ENCODE measurements at regions of chr1 and their contacts with region 1.

Region 1: GRCh38 chr1:155167166-155168104 is 5.7 kb downstream of the KRTCAP2 start:
- DNase-seq: peak; percentile 90 to 93
- ATAC-seq: peak; percentile 65 to 87 (median 78)
- H3K4me3 ChIP-seq: peak overlapping the region in 6 of 10 donors; percentile 2 to 37 (median 28)
- H3K27ac ChIP-seq: peak overlapping the region; percentile 63 to 90 (median 82)
- H3K4me1 ChIP-seq: peaks cover 11 to 44% (median 34%) of the 10 kb centered on the region in 9 donors
- H3K27me3 ChIP-seq: peaks cover 0 to 15% (median 0%) of the 10 kb centered on the region in 7 donors
- CTCF ChIP-seq: peak; percentile 83 to 97 (median 89)

Region 2: DNA sequence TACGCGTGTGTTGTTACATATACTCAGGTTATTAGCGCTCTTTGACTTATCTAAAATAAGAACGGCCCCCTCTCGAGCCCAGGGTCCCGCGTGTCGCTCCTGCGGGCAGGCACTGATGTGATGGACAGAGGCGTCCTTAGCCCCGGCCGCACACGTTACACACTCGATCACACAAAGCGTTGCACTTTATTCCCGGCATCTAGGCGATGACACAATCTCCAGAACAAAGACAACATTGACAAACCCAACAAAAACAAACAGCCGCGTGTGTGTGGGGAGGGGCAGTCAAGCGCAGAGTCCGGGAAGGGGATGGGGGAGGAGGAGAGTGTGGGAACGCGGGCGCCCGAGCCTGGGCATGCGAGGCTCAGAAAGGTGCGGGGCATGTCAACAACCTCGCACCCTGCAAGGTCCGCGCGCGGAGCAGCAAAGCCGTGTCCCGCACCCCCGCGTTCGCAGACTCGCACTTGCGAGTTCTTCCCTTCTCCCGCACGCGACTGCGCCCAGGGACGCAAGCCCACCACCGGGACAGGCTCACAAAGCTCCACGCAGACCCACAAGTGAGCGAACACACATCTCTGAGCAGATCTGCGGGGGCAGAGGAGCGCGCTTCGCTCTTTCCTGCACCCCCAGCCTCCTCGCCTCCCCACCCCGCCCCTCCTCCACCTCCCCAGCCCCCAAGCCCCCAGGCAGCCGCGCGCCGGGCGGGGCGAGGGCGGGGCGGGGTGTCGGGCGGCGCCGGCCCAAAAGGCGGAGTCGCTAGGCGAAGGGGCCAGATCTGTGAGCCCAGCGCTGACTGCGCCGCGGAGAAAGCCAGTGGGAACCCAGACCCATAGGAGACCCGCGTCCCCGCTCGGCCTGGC is 40.1 kb before region 1 on chr1 and contains the start of gene EFNA1:
- intact Hi-C with region 1: loop called in 5 of 10 experiments (anchors 2 to 5 kb)
- DNase-seq: peak; percentile 75 to 81
- ATAC-seq: peak; percentile 60 to 73 (median 70)
- H3K4me3 ChIP-seq: peak within 1 kb of the TSS; percentile 47 to 93 (median 79)
- H3K27ac ChIP-seq: peak within 1 kb of the TSS; percentile 81 to 99 (median 94)
- H3K4me1 ChIP-seq: peaks cover 17 to 73% (median 59%) of the 10 kb centered on the region in 9 donors
- H3K27me3 ChIP-seq: peaks cover 0 to 55% (median 0%) of the 10 kb centered on the region in 7 donors
- CTCF ChIP-seq: peak in 1 of 9 donors; percentile 1
- total RNA-seq, gene EFNA1: 28.9 to 50.0 (median 35.6) TPM

Region 3: DNA sequence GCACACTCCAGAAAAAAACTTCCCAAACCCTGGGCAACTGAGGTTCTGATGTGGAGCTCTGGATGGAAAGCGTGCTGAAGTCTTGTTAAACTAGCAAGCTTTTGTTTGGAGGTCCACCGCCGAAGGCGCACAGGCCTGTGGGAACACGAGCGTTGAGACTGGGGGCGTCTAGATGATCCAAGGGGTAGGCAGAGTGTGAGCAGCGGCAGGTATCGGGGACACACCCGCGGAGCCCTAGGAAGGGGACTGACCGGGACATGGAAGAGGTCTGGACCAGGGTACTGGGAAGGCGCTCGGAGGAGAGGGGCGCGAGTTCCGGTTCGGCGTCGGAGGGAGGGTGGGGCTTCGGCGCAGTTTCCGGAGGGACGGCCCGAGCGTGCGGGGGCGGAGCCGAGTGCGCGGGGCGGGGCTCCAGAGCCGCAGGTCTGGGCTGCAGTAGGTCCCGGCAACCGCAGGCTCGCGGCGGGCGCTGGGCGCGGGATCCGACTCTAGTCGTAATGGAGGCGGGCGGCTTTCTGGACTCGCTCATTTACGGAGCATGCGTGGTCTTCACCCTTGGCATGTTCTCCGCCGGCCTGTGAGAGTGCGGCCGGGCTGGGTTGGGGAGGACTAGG is 31.9 kb before region 1 on chr1 and contains the start of gene SLC50A1:
- intact Hi-C with region 1: loop called in 2 of 10 experiments (anchors 2 to 5 kb)
- DNase-seq: peak; percentile 94 to 95
- ATAC-seq: peak; percentile 89 to 95 (median 94)
- H3K4me3 ChIP-seq: peak within 1 kb of the TSS; percentile 29 to 76 (median 66)
- H3K27ac ChIP-seq: peak within 1 kb of the TSS; percentile 82 to 100 (median 98)
- H3K4me1 ChIP-seq: peaks cover 14 to 90% (median 76%) of the 10 kb centered on the region in 9 donors
- H3K27me3 ChIP-seq: no peaks in the 10 kb centered on the region
- CTCF ChIP-seq: peak in 7 of 9 donors; percentile 20 to 64 (median 41)
- total RNA-seq, gene SLC50A1: 5.5 to 16.8 (median 7.9) TPM